ENCODE measurements at regions of chr15 and their contacts with region 1.

Region 1: DNA sequence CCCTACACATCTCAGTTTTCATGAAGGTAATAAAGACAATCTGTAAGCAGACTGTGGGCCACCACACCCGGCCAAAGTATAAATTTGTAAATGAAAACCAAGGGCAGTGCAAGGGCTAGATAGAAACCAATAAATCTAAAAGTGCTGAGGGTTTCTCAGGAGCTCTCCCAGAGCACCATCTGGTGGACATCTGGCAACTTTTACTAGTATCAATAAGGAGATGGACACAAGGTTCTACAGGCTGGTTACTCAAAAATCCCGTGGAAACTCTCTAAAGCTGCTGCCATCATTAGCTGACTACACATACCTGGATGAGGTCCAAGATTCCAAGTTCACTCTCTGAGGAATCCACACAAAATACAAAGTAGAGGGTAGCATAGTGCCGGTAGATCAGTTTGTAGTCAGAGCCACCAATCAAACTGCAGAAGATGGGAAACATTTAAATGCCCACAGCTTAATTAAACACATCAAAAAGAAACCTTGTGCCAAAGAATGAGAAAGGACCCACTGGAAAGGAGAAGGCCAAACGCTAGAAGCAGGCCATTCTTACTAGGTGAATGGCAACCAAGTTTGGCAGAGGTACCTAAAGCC is 5.5 kb downstream of the AP3S2 start:
- DNase-seq: no peak
- H3K4me3 Mint-ChIP-seq: no peak overlapping the region
- H3K27ac Mint-ChIP-seq: no peak overlapping the region
- H3K4me1 Mint-ChIP-seq: peaks cover 29% of the 10 kb centered on the region
- H3K27me3 Mint-ChIP-seq: no peaks in the 10 kb centered on the region

Region 2: GRCh38 chr15:89740137-89740536 is 148.2 kb before region 1 on chr15:
- CTCF ChIA-PET with region 1: interaction called, 25 read pairs
- POLR2A ChIA-PET with region 1: interaction called, 4 read pairs
- DNase-seq: peak; percentile 55
- H3K4me3 Mint-ChIP-seq: no peak overlapping the region
- H3K27ac Mint-ChIP-seq: no peak overlapping the region
- H3K4me1 Mint-ChIP-seq: peaks cover 1% of the 10 kb centered on the region
- H3K27me3 Mint-ChIP-seq: peaks cover 5% of the 10 kb centered on the region

Region 3: DNA sequence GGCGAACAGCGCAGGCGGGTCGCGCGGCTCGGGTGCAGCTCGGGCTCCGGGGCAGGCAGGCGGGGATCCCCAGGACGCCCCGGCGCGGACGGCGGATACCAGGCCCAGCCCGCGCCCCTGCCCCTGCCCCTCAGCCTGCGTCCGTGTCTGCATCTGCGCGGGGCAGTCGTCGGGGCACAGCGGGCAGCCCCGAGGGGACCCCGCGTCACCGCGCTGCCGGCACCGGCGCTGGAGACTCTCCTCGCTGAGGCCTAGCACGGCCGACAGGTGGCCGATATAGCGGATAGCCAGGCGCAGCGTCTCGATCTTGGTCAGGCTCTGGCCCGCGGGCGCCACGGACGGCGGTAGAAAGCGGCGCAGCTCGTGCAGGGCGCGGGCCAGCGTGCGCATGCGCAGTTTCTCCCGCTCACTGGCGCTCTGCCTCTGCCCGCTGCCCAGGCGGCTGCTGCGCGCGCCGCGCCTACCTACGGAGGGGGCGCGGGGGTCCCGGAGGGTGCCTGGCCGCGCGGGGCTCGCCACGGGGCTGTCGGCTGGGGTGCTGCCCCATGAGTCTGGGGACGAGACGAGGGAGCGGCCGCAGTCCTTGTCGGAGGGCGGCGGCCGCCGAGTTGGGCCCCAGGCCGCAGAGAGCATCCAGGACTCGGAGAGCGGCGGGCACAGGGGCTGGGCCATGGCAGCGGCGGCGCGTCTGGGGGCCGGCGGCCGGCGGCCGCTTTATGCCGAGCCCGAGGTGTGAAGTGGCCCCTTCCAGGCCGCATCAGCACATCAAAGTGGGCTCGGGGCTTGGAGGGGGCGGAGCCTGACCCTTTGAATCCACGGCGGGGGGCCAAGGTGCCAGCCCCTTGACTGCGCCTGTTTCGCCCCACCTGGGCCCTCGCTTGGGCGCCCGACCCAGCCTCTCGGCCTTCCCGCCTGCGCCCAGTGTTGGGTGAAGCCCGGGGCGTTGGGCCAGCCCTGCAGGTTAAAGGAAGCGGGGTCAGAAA is 137.5 kb before region 1 on chr15 and contains the start of gene MESP1:
- CTCF ChIA-PET with region 1: interaction called, 11 read pairs
- POLR2A ChIA-PET with region 1: no interaction called
- DNase-seq: peak; percentile 90
- H3K4me3 Mint-ChIP-seq: peak within 1 kb of the TSS; percentile 68
- H3K27ac Mint-ChIP-seq: no peak within 1 kb of the TSS
- H3K4me1 Mint-ChIP-seq: peaks cover 6% of the 10 kb centered on the region
- H3K27me3 Mint-ChIP-seq: peaks cover 14% of the 10 kb centered on the region
- total RNA-seq, gene MESP1: 3.2 to 3.5 TPM

Region 4: GRCh38 chr15:89912674-89913396 is 24.5 kb after region 1 on chr15 and contains the start of gene ARPIN:
- CTCF ChIA-PET with region 1: no interaction called
- POLR2A ChIA-PET with region 1: no interaction called
- DNase-seq: no peak
- H3K4me3 Mint-ChIP-seq: no peak within 1 kb of the TSS
- H3K27ac Mint-ChIP-seq: no peak within 1 kb of the TSS
- H3K4me1 Mint-ChIP-seq: peaks cover 3% of the 10 kb centered on the region
- H3K27me3 Mint-ChIP-seq: peaks cover 44% of the 10 kb centered on the region
- total RNA-seq, gene ARPIN: not detected

Region 5: DNA sequence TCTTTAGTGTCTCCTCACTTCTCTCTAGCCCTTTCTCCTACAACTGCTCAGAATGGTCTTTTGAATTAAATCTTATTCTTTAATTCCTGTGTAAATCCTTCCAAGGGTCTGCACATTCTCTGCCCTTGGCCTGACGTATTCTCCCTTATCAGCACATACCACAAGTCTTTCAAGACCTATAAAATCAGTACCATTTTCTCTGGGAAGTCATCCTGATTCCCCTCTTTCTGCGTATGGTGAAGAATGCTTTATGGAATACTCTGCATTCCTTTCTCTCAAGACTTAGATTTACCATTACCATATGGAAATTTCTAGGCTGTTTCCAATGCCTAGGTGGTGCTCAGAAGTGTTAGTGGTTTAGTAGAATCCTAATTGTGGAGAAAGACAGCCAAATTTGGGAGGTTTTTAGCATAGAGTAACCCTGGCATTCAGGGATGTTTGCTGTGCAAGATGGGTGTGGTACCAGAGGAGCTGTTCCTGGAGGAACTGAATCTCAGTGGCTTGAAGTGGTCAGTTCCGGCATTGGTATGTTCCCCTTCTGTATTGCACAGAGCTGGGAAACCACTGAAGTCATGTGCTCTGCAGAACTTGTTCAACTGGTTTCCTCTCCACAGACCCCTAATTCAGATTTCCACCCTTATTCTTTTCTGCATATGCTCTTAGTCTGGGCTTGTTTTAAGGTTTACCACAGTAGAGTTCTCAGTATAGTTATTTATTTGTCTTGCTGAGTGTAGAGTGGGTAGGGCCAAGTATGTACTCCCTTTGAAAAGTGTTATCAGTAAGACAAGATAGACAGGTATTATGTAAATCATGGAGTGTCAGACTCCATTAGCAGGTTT is 524.3 kb after region 1 on chr15:
- CTCF ChIA-PET with region 1: no interaction called
- POLR2A ChIA-PET with region 1: no interaction called
- DNase-seq: no peak
- H3K4me3 Mint-ChIP-seq: no peak overlapping the region
- H3K27ac Mint-ChIP-seq: peak overlapping the region; percentile 34
- H3K4me1 Mint-ChIP-seq: peaks cover 73% of the 10 kb centered on the region
- H3K27me3 Mint-ChIP-seq: no peaks in the 10 kb centered on the region

Measured in activated CD4-positive, alpha-beta memory T cell treated with anti-CD3 and anti-CD28 coated beads, Interleukin-2, amount 10 ng/mL, durations not matched to agents 7 days and 5 days (primary cell).